Activated CD8-positive, alpha-beta T cell treated with anti-CD3 and anti-CD28 coated beads for 36 hours (primary cell): ENCODE measurements at regions of chr3 and their contacts with region 1.

Region 1: DNA sequence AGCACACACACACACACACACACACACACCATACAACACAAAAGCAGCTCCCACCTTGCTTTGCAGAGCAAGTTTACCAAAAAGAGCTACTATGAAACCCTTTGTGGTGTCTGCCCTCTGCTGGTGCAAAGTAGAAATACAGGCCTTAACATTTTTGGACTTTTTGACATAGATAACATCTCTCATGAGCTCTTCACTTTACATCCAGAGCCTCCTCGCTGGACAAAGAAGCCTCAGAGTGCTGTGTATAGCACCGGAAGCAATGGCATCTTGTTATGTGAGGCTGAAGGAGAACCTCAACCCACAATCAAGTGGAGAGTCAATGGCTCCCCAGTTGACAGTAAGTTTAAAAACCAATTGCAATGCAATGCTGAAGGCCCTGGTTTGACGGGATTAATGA is 157.9 kb downstream of the CHL1 start:
- DNase-seq: peak; percentile 44
- ATAC-seq: peak; percentile 72
- H3K4me3 Mint-ChIP-seq: no peak overlapping the region
- H3K27ac Mint-ChIP-seq: no peak overlapping the region
- H3K4me1 Mint-ChIP-seq: no peaks in the 10 kb centered on the region
- H3K27me3 Mint-ChIP-seq: no peaks in the 10 kb centered on the region
- CTCF ChIP-seq: peak; percentile 61

Region 2: DNA sequence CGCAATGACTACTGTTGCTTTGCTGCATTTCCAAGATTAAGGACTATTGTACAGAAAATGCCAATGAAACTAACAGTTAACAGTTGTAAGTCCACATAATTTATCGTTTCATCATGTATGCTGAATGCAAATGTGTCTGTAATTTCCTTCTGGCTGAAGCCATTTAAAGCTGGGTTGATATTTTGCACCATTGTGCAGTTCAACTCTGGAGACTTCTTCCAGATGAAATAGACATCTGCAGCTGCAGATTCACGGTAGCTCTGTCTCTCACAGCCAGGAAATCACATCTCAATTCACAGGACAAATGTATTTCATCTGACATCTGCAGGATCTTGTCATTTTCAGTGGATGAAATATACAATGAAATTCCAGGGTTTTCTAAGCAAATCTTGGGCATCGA is 12.4 kb before region 1 on chr3:
- CTCF ChIA-PET with region 1: interaction called, 10 read pairs
- POLR2A ChIA-PET with region 1: no interaction called
- intact Hi-C with region 1: no loop called
- DNase-seq: no peak
- ATAC-seq: no peak
- H3K4me3 Mint-ChIP-seq: no peak overlapping the region
- H3K27ac Mint-ChIP-seq: no peak overlapping the region
- H3K4me1 Mint-ChIP-seq: no peaks in the 10 kb centered on the region
- H3K27me3 Mint-ChIP-seq: no peaks in the 10 kb centered on the region
- CTCF ChIP-seq: no peak